Activated T-helper 1 cell treated with anti-CD3 and anti-CD28 coated beads, Interleukin-12 subunit alpha, Interleukin-12 subunit beta, Interleukin-2, Interleukin-4 antibody, amounts not matched to agents 30 ng/mL and 10 ng/mL and 1 ng/mL, durations not matched to agents 14 hours and 24 hours and 36 hours (primary cell): ENCODE measurements at regions of chr13 and their contacts with region 1.

Region 1: GRCh38 chr13:74062933-74063332 is 71.3 kb downstream of the KLF12 start:
- DNase-seq: no peak
- H3K4me3 Mint-ChIP-seq: peak overlapping the region; percentile 83
- H3K27ac Mint-ChIP-seq: peak overlapping the region; percentile 92
- H3K4me1 Mint-ChIP-seq: peaks cover 60% of the 10 kb centered on the region
- H3K27me3 Mint-ChIP-seq: no peaks in the 10 kb centered on the region

Region 2: DNA sequence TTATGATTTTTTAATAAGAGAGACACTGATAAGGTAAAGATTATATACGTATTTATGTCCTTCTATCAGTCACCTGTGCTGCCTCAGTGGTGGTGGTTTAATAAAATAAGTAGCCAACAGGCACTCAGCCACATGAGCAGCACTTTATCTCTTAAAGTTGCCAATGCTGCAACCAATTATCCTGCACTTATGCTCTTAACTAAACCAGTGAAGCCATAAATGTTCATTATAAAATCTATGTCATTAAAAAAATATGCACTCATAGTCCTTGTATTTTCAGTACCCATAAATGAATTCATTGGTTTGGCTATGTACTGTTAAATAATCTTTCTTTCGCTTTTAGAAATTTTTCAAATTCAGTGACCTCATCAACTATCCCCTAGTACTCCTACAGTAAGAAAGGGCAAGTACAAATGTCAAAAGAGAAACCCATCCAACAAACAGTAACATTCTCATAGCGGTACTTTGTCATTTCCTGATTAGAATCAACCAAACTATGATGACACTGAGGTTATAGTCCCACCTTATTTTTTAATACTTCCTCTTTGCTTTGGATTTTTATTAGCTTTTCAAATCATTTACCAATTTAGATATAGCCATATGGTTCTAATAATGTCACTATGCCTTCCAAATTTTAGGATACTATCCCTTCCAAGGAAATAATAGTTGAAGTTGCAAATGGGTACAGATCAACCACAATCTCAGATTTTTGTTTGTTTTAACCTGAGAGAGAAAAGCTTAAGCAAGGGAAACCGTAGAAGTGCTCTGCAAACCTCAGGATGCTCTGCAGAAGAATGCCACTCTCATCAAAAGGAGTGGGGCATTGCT is 119.6 kb before region 1 on chr13:
- intact Hi-C with region 1: loop called (anchors 5 kb)
- DNase-seq: no peak
- H3K4me3 Mint-ChIP-seq: no peak overlapping the region
- H3K27ac Mint-ChIP-seq: no peak overlapping the region
- H3K4me1 Mint-ChIP-seq: peaks cover 41% of the 10 kb centered on the region
- H3K27me3 Mint-ChIP-seq: no peaks in the 10 kb centered on the region

Region 3: GRCh38 chr13:74026753-74027152 is 36.2 kb before region 1 on chr13:
- intact Hi-C with region 1: loop called (anchors 2 kb)
- DNase-seq: peak; percentile 51
- H3K4me3 Mint-ChIP-seq: peak overlapping the region; percentile 57
- H3K27ac Mint-ChIP-seq: peak overlapping the region; percentile 67
- H3K4me1 Mint-ChIP-seq: peaks cover 28% of the 10 kb centered on the region
- H3K27me3 Mint-ChIP-seq: no peaks in the 10 kb centered on the region

Region 4: GRCh38 chr13:74040200-74040599 is 22.7 kb before region 1 on chr13:
- intact Hi-C with region 1: no loop called
- DNase-seq: no peak
- H3K4me3 Mint-ChIP-seq: no peak overlapping the region
- H3K27ac Mint-ChIP-seq: no peak overlapping the region
- H3K4me1 Mint-ChIP-seq: peaks cover 13% of the 10 kb centered on the region
- H3K27me3 Mint-ChIP-seq: no peaks in the 10 kb centered on the region

Region 5: GRCh38 chr13:74104661-74105275 is 41.8 kb after region 1 on chr13:
- intact Hi-C with region 1: no loop called
- DNase-seq: no peak
- H3K4me3 Mint-ChIP-seq: no peak overlapping the region
- H3K27ac Mint-ChIP-seq: no peak overlapping the region
- H3K4me1 Mint-ChIP-seq: peaks cover 16% of the 10 kb centered on the region
- H3K27me3 Mint-ChIP-seq: no peaks in the 10 kb centered on the region

Region 6: GRCh38 chr13:74243637-74244526 is 180.9 kb after region 1 on chr13:
- intact Hi-C with region 1: loop called (anchors 5 kb)
- DNase-seq: no peak
- H3K4me3 Mint-ChIP-seq: peak overlapping the region; percentile 60
- H3K27ac Mint-ChIP-seq: peak overlapping the region; percentile 82
- H3K4me1 Mint-ChIP-seq: peaks cover 32% of the 10 kb centered on the region
- H3K27me3 Mint-ChIP-seq: peaks cover 2% of the 10 kb centered on the region

Region 7: GRCh38 chr13:75771818-75772217 is 1708.9 kb after region 1 on chr13:
- intact Hi-C with region 1: no loop called
- DNase-seq: no peak
- H3K4me3 Mint-ChIP-seq: no peak overlapping the region
- H3K27ac Mint-ChIP-seq: no peak overlapping the region
- H3K4me1 Mint-ChIP-seq: peaks cover under 1% of the 10 kb centered on the region
- H3K27me3 Mint-ChIP-seq: no peaks in the 10 kb centered on the region